WTC11 (cell line): ENCODE measurements at regions of chr1 and their contacts with region 1.

Region 1: DNA sequence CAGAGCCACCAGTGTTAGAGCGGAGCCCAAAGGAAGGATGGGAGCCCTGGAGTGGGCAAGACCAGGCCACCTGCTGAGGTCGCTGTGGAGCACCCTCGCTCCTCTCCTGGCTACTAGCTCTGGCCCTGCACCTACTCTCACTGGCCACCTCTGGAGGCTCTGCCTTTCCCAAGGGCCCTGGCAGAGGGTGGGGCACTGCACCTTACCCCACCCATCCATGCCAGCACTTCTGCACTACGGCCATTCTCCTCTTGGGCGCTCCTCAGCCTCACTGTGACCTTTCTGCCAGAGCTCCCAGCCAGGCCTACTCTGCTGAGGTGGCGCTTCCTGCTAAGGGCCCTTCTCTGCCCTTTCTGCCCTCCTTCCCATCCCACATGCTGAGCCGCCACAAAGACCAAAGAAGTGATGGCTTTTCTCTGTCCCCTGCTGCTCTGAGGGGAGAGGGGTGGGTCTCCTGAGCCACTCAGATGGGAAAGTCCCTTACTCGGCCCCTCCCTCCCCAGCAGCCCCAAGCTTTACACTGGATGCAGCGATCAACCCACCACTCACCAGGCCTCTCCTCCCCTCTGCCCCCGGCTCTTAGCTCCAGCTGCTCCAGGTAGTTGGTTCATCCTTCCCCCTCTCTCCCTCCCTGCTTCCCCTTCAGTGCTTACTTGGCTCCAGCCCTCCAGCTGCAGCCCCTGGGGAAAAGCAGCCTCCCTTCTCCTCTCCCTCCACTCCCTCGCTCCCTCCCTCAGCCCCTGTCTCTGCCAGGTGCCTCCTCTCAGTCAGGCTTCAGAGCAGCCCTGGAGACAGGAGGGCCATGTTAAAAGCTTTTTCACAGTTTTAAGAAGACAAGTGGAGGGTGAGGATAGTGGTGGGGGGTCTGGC is 14.8 kb upstream of the TMEM222 start:
- DNase-seq: peak; percentile 67
- ATAC-seq: peak; percentile 85
- H3K4me3 Mint-ChIP-seq: peak overlapping the region; percentile 50
- H3K27ac Mint-ChIP-seq: peak overlapping the region; percentile 79
- H3K4me1 Mint-ChIP-seq: peaks cover 25% of the 10 kb centered on the region
- H3K27me3 Mint-ChIP-seq: peaks cover 4% of the 10 kb centered on the region
- CTCF ChIP-seq: no peak

Region 2: GRCh38 chr1:27154991-27155781 is 151.9 kb before region 1 on chr1 and contains the start of gene SLC9A1:
- CTCF ChIA-PET with region 1: no interaction called
- POLR2A ChIA-PET with region 1: no interaction called
- DNase-seq: peak; percentile 93
- ATAC-seq: peak; percentile 97
- H3K4me3 Mint-ChIP-seq: peak within 1 kb of the TSS; percentile 92
- H3K27ac Mint-ChIP-seq: peak within 1 kb of the TSS; percentile 78
- H3K4me1 Mint-ChIP-seq: peaks cover 26% of the 10 kb centered on the region
- H3K27me3 Mint-ChIP-seq: no peaks in the 10 kb centered on the region
- CTCF ChIP-seq: no peak
- total RNA-seq, gene SLC9A1: 22.0 to 25.1 TPM (median 22.5 TPM) in 3 replicates

Region 3: GRCh38 chr1:27321813-27322577 is 14.9 kb after region 1 on chr1 and contains the start of gene TMEM222:
- CTCF ChIA-PET with region 1: interaction called, 13 read pairs
- POLR2A ChIA-PET with region 1: interaction called, 3 read pairs
- DNase-seq: peak; percentile 97
- ATAC-seq: peak; percentile 98
- H3K4me3 Mint-ChIP-seq: peak within 1 kb of the TSS; percentile 98
- H3K27ac Mint-ChIP-seq: peak within 1 kb of the TSS; percentile 97
- H3K4me1 Mint-ChIP-seq: peaks cover 17% of the 10 kb centered on the region
- H3K27me3 Mint-ChIP-seq: peaks cover 4% of the 10 kb centered on the region
- CTCF ChIP-seq: no peak
- total RNA-seq, gene TMEM222: 24.9 to 29.8 TPM (median 28.7 TPM) in 3 replicates

Region 4: GRCh38 chr1:27341525-27342252 is 34.6 kb after region 1 on chr1 and contains the start of gene SYTL1:
- CTCF ChIA-PET with region 1: interaction called, 12 read pairs
- POLR2A ChIA-PET with region 1: interaction called, 6 read pairs
- DNase-seq: peak; percentile 72
- ATAC-seq: peak; percentile 80
- H3K4me3 Mint-ChIP-seq: peak within 1 kb of the TSS; percentile 67
- H3K27ac Mint-ChIP-seq: peak within 1 kb of the TSS; percentile 38
- H3K4me1 Mint-ChIP-seq: peaks cover 39% of the 10 kb centered on the region
- H3K27me3 Mint-ChIP-seq: peaks cover 2% of the 10 kb centered on the region; the same call in 1 of the 2 replicates
- CTCF ChIP-seq: no peak
- total RNA-seq, gene SYTL1: 18.0 to 19.7 TPM (median 18.5 TPM) in 3 replicates

Region 5: DNA sequence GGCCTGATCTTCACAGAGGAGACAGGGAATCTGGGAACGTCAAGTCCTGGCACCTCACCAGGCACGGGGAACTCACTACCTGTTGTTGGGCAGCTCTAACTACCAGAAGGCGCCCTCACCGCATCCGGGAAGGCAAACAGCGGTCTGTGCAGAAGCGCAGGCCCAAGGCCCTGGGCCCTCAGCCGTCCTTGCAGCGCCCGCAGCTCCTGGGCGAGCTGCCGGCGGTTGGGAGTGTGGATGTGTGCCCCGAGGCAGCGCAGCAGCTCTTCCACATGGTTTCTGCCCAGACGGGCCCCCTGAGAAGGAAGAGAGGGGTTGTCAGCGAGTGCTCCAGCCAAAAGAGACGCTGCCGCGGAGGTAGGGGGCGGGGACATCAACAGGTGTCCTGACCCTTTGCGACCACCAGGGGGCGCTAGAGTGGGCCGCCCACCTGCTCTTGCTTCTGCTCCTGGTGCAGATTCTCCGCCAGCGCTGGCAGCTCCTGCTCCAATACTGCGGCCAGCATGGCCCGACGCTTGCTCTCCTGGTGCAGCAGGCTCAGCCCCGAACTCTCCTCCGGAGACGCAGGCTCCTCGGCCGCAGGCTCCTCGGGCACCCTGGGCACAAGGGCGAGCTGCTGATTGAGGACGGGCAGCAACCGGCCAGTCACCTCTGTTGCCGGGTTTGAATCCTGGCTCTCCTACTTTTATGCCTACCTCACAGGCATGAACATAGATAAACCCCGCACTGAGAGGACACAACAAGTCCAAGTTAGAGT is 50.3 kb after region 1 on chr1:
- CTCF ChIA-PET with region 1: interaction called, 100 read pairs
- POLR2A ChIA-PET with region 1: no interaction called
- DNase-seq: peak; percentile 87
- ATAC-seq: peak; percentile 70
- H3K4me3 Mint-ChIP-seq: peak overlapping the region; percentile 37
- H3K27ac Mint-ChIP-seq: no peak overlapping the region
- H3K4me1 Mint-ChIP-seq: peaks cover 17% of the 10 kb centered on the region
- H3K27me3 Mint-ChIP-seq: peaks cover 49% of the 10 kb centered on the region
- CTCF ChIP-seq: peak; percentile 100

Region 6: GRCh38 chr1:27383039-27383605 is 76.0 kb after region 1 on chr1 and contains the start of gene CD164L2:
- CTCF ChIA-PET with region 1: interaction called, 260 read pairs
- POLR2A ChIA-PET with region 1: interaction called, 3 read pairs
- DNase-seq: peak; percentile 93
- ATAC-seq: peak; percentile 95
- H3K4me3 Mint-ChIP-seq: peak within 1 kb of the TSS; percentile 67
- H3K27ac Mint-ChIP-seq: no peak within 1 kb of the TSS
- H3K4me1 Mint-ChIP-seq: peaks cover 4% of the 10 kb centered on the region; the same call in 1 of the 2 replicates
- H3K27me3 Mint-ChIP-seq: peaks cover 31% of the 10 kb centered on the region
- CTCF ChIP-seq: no peak
- total RNA-seq, gene CD164L2: 3.0 to 5.5 TPM (median 4.3 TPM) in 3 replicates

Region 7: GRCh38 chr1:27662707-27663393 is 355.7 kb after region 1 on chr1:
- CTCF ChIA-PET with region 1: interaction called, 20 read pairs
- POLR2A ChIA-PET with region 1: no interaction called
- DNase-seq: peak; percentile 95
- ATAC-seq: peak; percentile 81
- H3K4me3 Mint-ChIP-seq: no peak overlapping the region
- H3K27ac Mint-ChIP-seq: peak overlapping the region; percentile 75
- H3K4me1 Mint-ChIP-seq: peaks cover 29% of the 10 kb centered on the region
- H3K27me3 Mint-ChIP-seq: peaks cover 3% of the 10 kb centered on the region; the same call in 1 of the 2 replicates
- CTCF ChIP-seq: peak; percentile 91